GM12878 (cell line): ENCODE measurements at regions of chr3 and their contacts with region 1.

Region 1: GRCh38 chr3:10561946-10562560 is 56.7 kb upstream of the ATP2B2 start:
- DNase-seq: no peak
- ATAC-seq: no peak
- H3K4me3 ChIP-seq: no peak overlapping the region
- H3K27ac ChIP-seq: no peak overlapping the region
- H3K4me1 ChIP-seq: peaks cover 5% of the 10 kb centered on the region
- H3K27me3 ChIP-seq: no peaks in the 10 kb centered on the region; a peak in 1 of 4 replicates
- CTCF ChIP-seq: no peak
- EP300 ChIP-seq: no peak
- POLR2A ChIP-seq: no peak
- RAD21 ChIP-seq: no peak

Region 2: GRCh38 chr3:9525078-9525477 is 1037.0 kb before region 1 on chr3:
- CTCF ChIA-PET with region 1: no interaction called
- POLR2A ChIA-PET with region 1: no interaction called
- RAD21 ChIA-PET with region 1: no interaction called
- SMC1A ChIA-PET with region 1: no interaction called
- in situ Hi-C with region 1: no loop called
- intact Hi-C with region 1: no loop called
- DNase-seq: no peak
- ATAC-seq: no peak
- H3K4me3 ChIP-seq: no peak overlapping the region
- H3K27ac ChIP-seq: no peak overlapping the region
- H3K4me1 ChIP-seq: no peaks in the 10 kb centered on the region
- H3K27me3 ChIP-seq: no peaks in the 10 kb centered on the region
- CTCF ChIP-seq: no peak
- EP300 ChIP-seq: no peak
- POLR2A ChIP-seq: no peak
- RAD21 ChIP-seq: no peak

Region 3: GRCh38 chr3:10232137-10232536 is 329.9 kb before region 1 on chr3:
- CTCF ChIA-PET with region 1: no interaction called
- POLR2A ChIA-PET with region 1: no interaction called
- RAD21 ChIA-PET with region 1: no interaction called
- SMC1A ChIA-PET with region 1: no interaction called
- in situ Hi-C with region 1: no loop called
- intact Hi-C with region 1: no loop called
- DNase-seq: no peak
- ATAC-seq: peak; percentile 31; the same call in 1 of the 3 replicates
- H3K4me3 ChIP-seq: no peak overlapping the region
- H3K27ac ChIP-seq: no peak overlapping the region
- H3K4me1 ChIP-seq: peaks cover 12% of the 10 kb centered on the region
- H3K27me3 ChIP-seq: no peaks in the 10 kb centered on the region
- CTCF ChIP-seq: no peak
- EP300 ChIP-seq: no peak
- POLR2A ChIP-seq: no peak
- RAD21 ChIP-seq: peak; percentile 12; the same call in 1 of the 2 replicates

Region 4: GRCh38 chr3:10551821-10552630 is 10.0 kb before region 1 on chr3:
- CTCF ChIA-PET with region 1: interaction called, 10 read pairs
- POLR2A ChIA-PET with region 1: no interaction called
- RAD21 ChIA-PET with region 1: no interaction called
- SMC1A ChIA-PET with region 1: interaction called, 9 read pairs
- in situ Hi-C with region 1: no loop called
- intact Hi-C with region 1: no loop called
- DNase-seq: no peak
- ATAC-seq: peak; percentile 87
- H3K4me3 ChIP-seq: no peak overlapping the region
- H3K27ac ChIP-seq: no peak overlapping the region
- H3K4me1 ChIP-seq: no peaks in the 10 kb centered on the region
- H3K27me3 ChIP-seq: no peaks in the 10 kb centered on the region; a peak in 1 of 4 replicates
- CTCF ChIP-seq: no peak
- EP300 ChIP-seq: no peak
- POLR2A ChIP-seq: no peak
- RAD21 ChIP-seq: no peak